Activated B cell treated with CpG ODN at 0.5 μM for 24 hours (primary cell): ENCODE measurements at regions of chr20 and their contacts with region 1.

Region 1: DNA sequence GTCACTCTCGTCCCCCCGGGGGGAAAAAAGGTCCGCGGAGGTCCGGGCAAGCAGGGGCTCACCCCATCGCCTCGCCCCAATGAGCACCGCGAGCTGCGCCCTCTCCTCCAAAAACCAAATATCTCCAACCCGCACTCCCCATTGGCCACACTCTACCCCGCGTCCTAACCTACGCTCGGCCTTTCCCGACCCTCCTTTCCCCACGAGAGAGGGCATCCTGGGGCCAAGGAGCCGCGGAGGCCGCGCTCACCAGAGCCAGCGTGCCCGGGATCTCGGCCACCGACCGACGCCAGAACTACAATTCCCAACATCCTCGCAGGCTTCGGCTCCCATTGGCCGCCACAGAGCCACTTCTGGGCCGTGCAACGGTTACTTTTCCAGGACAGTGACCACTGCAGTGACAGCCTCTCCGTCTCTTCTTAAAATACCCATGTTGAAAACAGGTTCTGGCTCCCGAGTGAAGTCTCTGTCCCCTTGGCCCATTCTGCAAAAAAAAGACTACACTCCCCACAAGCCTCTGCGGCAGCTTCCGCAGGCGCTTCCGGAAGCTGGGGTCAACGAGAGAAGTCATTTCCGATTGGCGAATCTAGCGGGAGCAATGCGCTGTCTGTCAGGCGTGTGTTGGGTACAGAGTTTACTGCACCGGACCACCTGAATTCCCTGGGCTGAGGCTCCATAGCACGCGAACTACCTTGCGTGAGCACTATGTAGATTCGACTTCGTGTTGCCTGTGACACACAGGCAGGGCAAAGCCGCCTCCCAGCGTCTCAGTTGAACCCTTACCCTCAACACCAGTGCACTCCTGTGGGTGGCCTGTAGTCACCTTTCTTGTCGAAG is at the start of gene ZNF343:
- DNase-seq: peak; percentile 72
- ATAC-seq: peak; percentile 93
- H3K4me3 Mint-ChIP-seq: peak within 1 kb of the TSS; percentile 100
- H3K27ac Mint-ChIP-seq: peak within 1 kb of the TSS; percentile 96
- H3K4me1 Mint-ChIP-seq: peaks cover 23% of the 10 kb centered on the region
- H3K27me3 Mint-ChIP-seq: peaks cover 18% of the 10 kb centered on the region
- CTCF ChIP-seq: no peak
- total RNA-seq, gene ZNF343: 14.8 and 16.6 TPM in 2 replicates

Region 2: DNA sequence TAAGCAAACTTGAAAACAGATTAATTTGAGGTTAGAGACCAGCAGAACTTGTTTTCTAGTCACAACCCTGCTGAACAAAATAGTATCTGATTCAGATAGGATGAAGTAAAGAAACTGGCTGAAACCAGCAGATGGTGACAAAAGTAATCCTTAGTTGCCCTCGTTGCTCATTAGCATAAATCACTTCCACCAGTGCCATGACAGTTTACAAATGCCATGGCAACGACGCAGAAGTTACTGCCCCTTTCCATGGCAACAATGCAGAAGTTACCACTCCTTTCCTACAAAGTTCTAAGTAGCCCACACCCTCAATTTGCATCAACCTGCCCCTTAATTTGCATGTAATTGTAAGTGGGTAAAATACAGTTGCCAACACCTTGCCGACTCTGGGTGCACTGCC is 62.0 kb before region 1 on chr20:
- CTCF ChIA-PET with region 1: no interaction called
- POLR2A ChIA-PET with region 1: no interaction called
- intact Hi-C with region 1: no loop called
- DNase-seq: no peak
- ATAC-seq: no peak
- H3K4me3 Mint-ChIP-seq: no peak overlapping the region
- H3K27ac Mint-ChIP-seq: no peak overlapping the region
- H3K4me1 Mint-ChIP-seq: peaks cover 2% of the 10 kb centered on the region
- H3K27me3 Mint-ChIP-seq: no peaks in the 10 kb centered on the region
- CTCF ChIP-seq: no peak

Region 3: DNA sequence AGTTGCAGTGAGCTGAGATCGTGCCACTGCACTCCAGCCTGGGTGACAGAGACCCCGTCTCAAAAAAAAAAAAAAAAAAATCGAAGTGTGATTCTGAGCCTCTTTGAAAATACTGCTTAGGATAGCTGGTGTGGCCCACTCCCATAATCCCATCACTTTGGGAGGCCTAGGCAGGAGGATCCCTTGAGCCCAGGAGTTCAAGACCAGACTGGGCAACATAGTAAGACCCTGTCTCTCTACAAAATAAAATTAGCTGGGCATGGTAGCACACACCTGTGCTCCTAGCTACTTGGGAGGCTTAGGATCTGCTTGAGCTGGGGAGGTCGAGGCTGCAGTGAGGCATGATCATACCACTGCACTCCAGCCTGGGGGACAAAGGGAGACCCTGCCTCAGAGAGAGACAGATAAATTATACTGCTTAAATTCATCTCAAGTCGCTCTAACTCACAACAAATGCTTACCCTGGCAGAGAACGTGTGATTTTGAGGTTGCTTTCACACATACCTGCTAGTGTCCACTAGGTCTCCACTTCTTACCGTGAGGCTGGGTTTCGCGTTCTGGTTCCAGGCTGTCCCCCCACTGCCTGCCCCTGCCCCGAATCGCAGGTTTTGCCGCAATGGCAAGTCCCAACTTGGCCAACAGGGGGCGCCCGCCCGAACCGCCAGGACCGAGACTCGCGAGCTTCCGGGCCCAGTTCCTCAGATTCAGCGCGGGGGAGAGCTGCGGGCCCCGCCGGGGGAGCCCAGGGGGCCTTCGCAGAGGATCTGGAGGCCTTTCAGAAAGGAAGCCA is 15.3 kb after region 1 on chr20:
- CTCF ChIA-PET with region 1: interaction called, 20 read pairs
- POLR2A ChIA-PET with region 1: interaction called, 16 read pairs
- intact Hi-C with region 1: loop called (anchors 1 kb)
- DNase-seq: peak; percentile 91
- ATAC-seq: peak; percentile 80
- H3K4me3 Mint-ChIP-seq: peak overlapping the region; percentile 90
- H3K27ac Mint-ChIP-seq: peak overlapping the region; percentile 75
- H3K4me1 Mint-ChIP-seq: peaks cover 15% of the 10 kb centered on the region
- H3K27me3 Mint-ChIP-seq: peaks cover 4% of the 10 kb centered on the region
- CTCF ChIP-seq: peak; percentile 81

Region 4: GRCh38 chr20:3470627-3471396 is 962.0 kb after region 1 on chr20 and contains the start of gene ATRN:
- CTCF ChIA-PET with region 1: no interaction called
- POLR2A ChIA-PET with region 1: no interaction called
- intact Hi-C with region 1: loop called (anchors 5 kb)
- DNase-seq: peak; percentile 98
- ATAC-seq: peak; percentile 94
- H3K4me3 Mint-ChIP-seq: peak within 1 kb of the TSS; percentile 93
- H3K27ac Mint-ChIP-seq: peak within 1 kb of the TSS; percentile 64
- H3K4me1 Mint-ChIP-seq: peaks cover 32% of the 10 kb centered on the region
- H3K27me3 Mint-ChIP-seq: peaks cover 1% of the 10 kb centered on the region
- CTCF ChIP-seq: no peak
- total RNA-seq, gene ATRN: 11.5 and 13.0 TPM in 2 replicates